ENCODE measurements at regions of chr2 and their contacts with region 1.

Region 1: GRCh38 chr2:84954329-84954728 is 16.6 kb upstream of the KCMF1 start:
- DNase-seq: no peak
- H3K4me3 Mint-ChIP-seq: no peak overlapping the region
- H3K27ac Mint-ChIP-seq: no peak overlapping the region
- H3K4me1 Mint-ChIP-seq: peaks cover 15% of the 10 kb centered on the region
- H3K27me3 Mint-ChIP-seq: no peaks in the 10 kb centered on the region

Region 2: GRCh38 chr2:84939426-84940087 is 14.8 kb before region 1 on chr2:
- CTCF ChIA-PET with region 1: interaction called, 16 read pairs
- POLR2A ChIA-PET with region 1: no interaction called
- DNase-seq: peak; percentile 86
- H3K4me3 Mint-ChIP-seq: peak overlapping the region; percentile 59
- H3K27ac Mint-ChIP-seq: peak overlapping the region; percentile 95
- H3K4me1 Mint-ChIP-seq: peaks cover 66% of the 10 kb centered on the region
- H3K27me3 Mint-ChIP-seq: no peaks in the 10 kb centered on the region

Region 3: GRCh38 chr2:84991404-84992151 is 37.2 kb after region 1 on chr2:
- CTCF ChIA-PET with region 1: no interaction called
- POLR2A ChIA-PET with region 1: no interaction called
- DNase-seq: no peak
- H3K4me3 Mint-ChIP-seq: no peak overlapping the region
- H3K27ac Mint-ChIP-seq: no peak overlapping the region
- H3K4me1 Mint-ChIP-seq: peaks cover 31% of the 10 kb centered on the region
- H3K27me3 Mint-ChIP-seq: no peaks in the 10 kb centered on the region

Measured in activated CD4-positive, alpha-beta T cell treated with anti-CD3 and anti-CD28 coated beads, Interleukin-2, amount 10 ng/mL, durations not matched to agents 7 days and 5 days (primary cell).